Transverse colon (tissue), 4 donors: ENCODE measurements at regions of chr14 and their contacts with region 1.

Region 1: GRCh38 chr14:89237921-89238529 is 179.0 kb downstream of the FOXN3 start:
- DNase-seq: no peak
- H3K4me3 ChIP-seq: no peak overlapping the region
- H3K27ac ChIP-seq: no peak overlapping the region
- H3K4me1 ChIP-seq: peaks cover 0 to under 1% (median 0%) of the 10 kb centered on the region in 4 donors
- H3K27me3 ChIP-seq: no peaks in the 10 kb centered on the region
- CTCF ChIP-seq: peak in 3 of 5 experiments; percentile 13 to 23 (median 20)
- EP300 ChIP-seq: no peak
- POLR2A ChIP-seq: no peak

Region 2: DNA sequence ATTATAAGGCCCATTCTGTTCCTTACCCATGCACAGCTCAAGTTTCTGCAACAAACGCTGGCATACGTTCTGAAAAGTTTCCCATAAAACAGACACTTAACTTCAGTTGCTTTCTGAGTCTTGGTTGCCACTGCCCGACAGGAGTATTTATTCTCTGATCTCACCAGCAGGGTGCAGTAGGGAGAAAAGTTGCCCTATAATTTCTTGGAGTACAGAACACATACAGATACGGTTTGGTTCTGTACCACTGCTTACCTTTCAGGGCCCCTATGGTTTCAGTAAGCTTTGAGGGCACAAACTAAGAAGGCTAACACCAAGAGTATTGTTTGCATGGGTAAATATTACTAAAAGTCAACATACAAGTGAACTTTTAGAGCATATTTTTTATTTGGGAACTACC is 774.7 kb before region 1 on chr14:
- in situ Hi-C with region 1: no loop called
- intact Hi-C with region 1: loop called (anchors 10 kb)
- DNase-seq: no peak
- H3K4me3 ChIP-seq: no peak overlapping the region
- H3K27ac ChIP-seq: no peak overlapping the region
- H3K4me1 ChIP-seq: no peaks in the 10 kb centered on the region
- H3K27me3 ChIP-seq: no peaks in the 10 kb centered on the region
- CTCF ChIP-seq: peak; percentile 29 to 35 (median 29)
- EP300 ChIP-seq: no peak
- POLR2A ChIP-seq: no peak